Aorta (tissue), 5 donors: ENCODE measurements at regions of chr13 and their contacts with region 1.

Region 1: DNA sequence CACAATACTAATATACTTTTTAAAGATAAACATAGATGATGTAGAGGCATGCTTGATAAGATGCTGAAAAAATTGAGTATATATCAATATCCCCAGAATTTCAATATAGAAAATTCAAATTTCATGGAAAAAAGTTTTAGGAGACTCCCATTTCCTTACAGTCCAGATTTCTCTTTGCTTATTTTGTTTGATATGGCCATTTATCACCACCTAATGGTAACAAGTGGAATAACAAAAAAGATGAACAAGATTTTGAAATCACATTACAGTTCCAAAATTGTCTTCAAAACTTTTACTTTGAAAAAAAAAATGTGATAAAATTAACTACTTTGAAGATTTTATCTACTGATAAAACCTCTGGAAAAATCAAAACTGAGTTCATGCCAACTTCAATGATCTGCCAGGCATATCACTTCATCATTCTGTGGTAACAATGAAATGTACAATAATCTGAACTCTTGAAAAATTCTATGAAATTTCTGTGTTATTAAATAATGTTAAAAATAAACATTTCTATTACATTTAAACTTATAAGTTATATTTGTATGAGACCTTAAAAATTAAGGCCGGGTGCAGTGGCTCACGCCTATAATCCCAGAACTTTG is 17.5 kb downstream of the MIPEP start:
- DNase-seq: no peak
- ATAC-seq: no peak
- H3K4me3 ChIP-seq: no peak overlapping the region
- H3K27ac ChIP-seq: no peak overlapping the region
- H3K4me1 ChIP-seq: no peaks in the 10 kb centered on the region
- H3K27me3 ChIP-seq: no peaks in the 10 kb centered on the region

Region 2: GRCh38 chr13:23679220-23679619 is 192.5 kb before region 1 on chr13:
- intact Hi-C with region 1: no loop called
- DNase-seq: no peak
- ATAC-seq: no peak
- H3K4me3 ChIP-seq: no peak overlapping the region
- H3K27ac ChIP-seq: no peak overlapping the region
- H3K4me1 ChIP-seq: no peaks in the 10 kb centered on the region
- H3K27me3 ChIP-seq: no peaks in the 10 kb centered on the region

Region 3: DNA sequence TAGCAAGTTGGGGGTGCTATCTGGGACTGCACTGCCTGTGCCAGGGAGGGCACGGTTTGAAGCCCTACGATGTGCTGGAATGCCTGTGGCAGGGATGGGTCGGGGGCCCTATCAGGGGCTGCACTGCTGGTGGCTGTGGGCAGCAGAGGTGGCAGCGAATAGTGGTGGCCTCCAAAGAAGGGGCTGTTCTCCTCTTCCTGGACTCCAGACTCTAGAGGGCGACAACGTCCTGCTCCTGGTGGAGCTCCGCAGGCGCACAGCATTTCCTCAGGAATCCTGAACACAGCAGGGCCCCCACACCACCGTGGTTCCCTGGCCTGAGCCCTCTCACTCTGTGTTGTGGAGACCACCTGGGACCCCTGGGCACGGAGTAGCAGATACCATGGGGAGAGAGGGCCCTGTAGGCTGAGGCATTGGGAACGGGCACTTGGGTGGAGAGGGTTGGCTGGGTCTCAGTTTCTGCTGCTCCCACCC is 155.9 kb before region 1 on chr13:
- intact Hi-C with region 1: loop called in 1 of 2 experiments (anchors 10 kb)
- DNase-seq: no peak
- ATAC-seq: no peak
- H3K4me3 ChIP-seq: no peak overlapping the region
- H3K27ac ChIP-seq: no peak overlapping the region
- H3K4me1 ChIP-seq: no peaks in the 10 kb centered on the region
- H3K27me3 ChIP-seq: no peaks in the 10 kb centered on the region